Thyroid gland (tissue), 4 donors: ENCODE measurements at regions of chr14 and their contacts with region 1.

Region 1: GRCh38 chr14:20613094-20614037 is 22.2 kb upstream of the RNASE12 start:
- DNase-seq: peak; percentile 80 to 87
- H3K4me3 ChIP-seq: peak overlapping the region; percentile 9 to 29 (median 11)
- H3K27ac ChIP-seq: peak overlapping the region; percentile 30 to 79 (median 61)
- H3K4me1 ChIP-seq: no peaks in the 10 kb centered on the region
- H3K27me3 ChIP-seq: no peaks in the 10 kb centered on the region
- CTCF ChIP-seq: peak in 5 of 6 experiments; percentile 53 to 99 (median 90)
- POLR2A ChIP-seq: no peak

Region 2: GRCh38 chr14:20327005-20327869 is 286.1 kb before region 1 on chr14:
- intact Hi-C with region 1: loop called (anchors 5 kb)
- DNase-seq: no peak
- H3K4me3 ChIP-seq: no peak overlapping the region
- H3K27ac ChIP-seq: no peak overlapping the region
- H3K4me1 ChIP-seq: peaks cover 10 to 14% of the 10 kb centered on the region in 2 donors
- H3K27me3 ChIP-seq: no peaks in the 10 kb centered on the region
- CTCF ChIP-seq: peak; percentile 39 to 79 (median 73)
- POLR2A ChIP-seq: no peak

Region 3: DNA sequence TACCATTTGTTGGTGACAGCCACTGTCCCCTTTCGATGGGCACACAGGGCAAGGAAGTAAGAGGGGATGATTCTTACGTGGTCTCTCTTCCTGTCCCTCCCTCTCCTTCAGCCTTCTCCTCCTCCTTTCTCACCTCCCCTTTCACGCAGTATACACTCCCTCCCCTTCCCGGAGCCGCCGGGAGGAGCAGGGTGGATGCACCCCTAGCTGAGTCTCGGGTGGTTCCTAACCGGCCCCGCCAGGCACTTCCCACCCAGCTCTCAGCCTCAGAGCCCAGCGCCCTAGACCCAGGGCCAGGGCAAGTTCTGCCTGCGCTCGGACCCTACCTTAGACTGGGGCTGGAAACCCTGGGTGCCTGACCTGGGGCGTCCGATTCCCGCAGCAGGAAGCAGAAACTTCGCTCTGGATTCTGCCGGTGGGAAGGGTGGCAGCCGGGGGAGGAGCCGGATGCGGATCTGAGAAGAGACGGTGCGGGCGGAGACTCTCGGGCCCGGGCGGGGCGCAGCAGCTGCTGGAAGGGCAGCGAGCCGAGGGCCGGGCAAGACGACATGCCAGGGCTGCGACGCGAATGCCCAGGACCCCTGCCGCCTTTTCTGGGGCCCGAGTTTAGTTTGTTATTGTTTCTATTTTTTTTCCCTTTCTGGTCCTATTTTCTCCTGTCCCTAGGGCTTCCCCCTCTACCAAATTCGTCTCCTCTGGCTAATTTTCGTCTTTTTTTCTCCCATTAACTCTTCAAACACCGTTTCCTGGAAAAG is 200.1 kb before region 1 on chr14 and contains the start of gene TEP1:
- intact Hi-C with region 1: loop called (anchors 5 kb)
- DNase-seq: peak; percentile 94 to 95
- H3K4me3 ChIP-seq: peak within 1 kb of the TSS; percentile 59 to 89 (median 76)
- H3K27ac ChIP-seq: peak within 1 kb of the TSS; percentile 93 to 98 (median 94)
- H3K4me1 ChIP-seq: peaks cover 5 to 11% of the 10 kb centered on the region in 2 donors
- H3K27me3 ChIP-seq: no peaks in the 10 kb centered on the region
- CTCF ChIP-seq: peak in 2 of 6 experiments; percentile 23 to 24
- POLR2A ChIP-seq: peak; percentile 17 to 93
- total RNA-seq, gene TEP1: 26.6 to 39.3 (median 29.7) TPM

Region 4: GRCh38 chr14:20530771-20531571 is 82.4 kb before region 1 on chr14:
- intact Hi-C with region 1: loop called (anchors 5 kb)
- DNase-seq: peak; percentile 84 to 91
- H3K4me3 ChIP-seq: no peak overlapping the region
- H3K27ac ChIP-seq: no peak overlapping the region
- H3K4me1 ChIP-seq: no peaks in the 10 kb centered on the region
- H3K27me3 ChIP-seq: no peaks in the 10 kb centered on the region
- CTCF ChIP-seq: peak; percentile 45 to 76 (median 66)
- POLR2A ChIP-seq: no peak